Panc1 (cell line): ENCODE measurements at regions of chr16 and their contacts with region 1.

Region 1: GRCh38 chr16:56795011-56795410 is 65.1 kb downstream of the NUP93 start:
- DNase-seq: no peak
- ATAC-seq: no peak
- H3K4me3 ChIP-seq: no peak overlapping the region
- H3K27ac ChIP-seq: no peak overlapping the region
- H3K4me1 ChIP-seq: 0 out of 2 replicates have a peak, but pooled peaks cover 5% of the 10 kb centered on the region
- H3K27me3 ChIP-seq: no peaks in the 10 kb centered on the region
- CTCF ChIP-seq: no peak

Region 2: GRCh38 chr16:56844056-56844455 is 49.0 kb after region 1 on chr16:
- CTCF ChIA-PET with region 1: interaction called, 13 read pairs
- POLR2A ChIA-PET with region 1: no interaction called
- in situ Hi-C with region 1: no loop called
- intact Hi-C with region 1: no loop called
- DNase-seq: no peak
- ATAC-seq: no peak
- H3K4me3 ChIP-seq: no peak overlapping the region
- H3K27ac ChIP-seq: no peak overlapping the region
- H3K4me1 ChIP-seq: no peaks in the 10 kb centered on the region
- H3K27me3 ChIP-seq: no peaks in the 10 kb centered on the region
- CTCF ChIP-seq: no peak